IMR-90 (cell line): ENCODE measurements at regions of chr14 and their contacts with region 1.

Region 1: DNA sequence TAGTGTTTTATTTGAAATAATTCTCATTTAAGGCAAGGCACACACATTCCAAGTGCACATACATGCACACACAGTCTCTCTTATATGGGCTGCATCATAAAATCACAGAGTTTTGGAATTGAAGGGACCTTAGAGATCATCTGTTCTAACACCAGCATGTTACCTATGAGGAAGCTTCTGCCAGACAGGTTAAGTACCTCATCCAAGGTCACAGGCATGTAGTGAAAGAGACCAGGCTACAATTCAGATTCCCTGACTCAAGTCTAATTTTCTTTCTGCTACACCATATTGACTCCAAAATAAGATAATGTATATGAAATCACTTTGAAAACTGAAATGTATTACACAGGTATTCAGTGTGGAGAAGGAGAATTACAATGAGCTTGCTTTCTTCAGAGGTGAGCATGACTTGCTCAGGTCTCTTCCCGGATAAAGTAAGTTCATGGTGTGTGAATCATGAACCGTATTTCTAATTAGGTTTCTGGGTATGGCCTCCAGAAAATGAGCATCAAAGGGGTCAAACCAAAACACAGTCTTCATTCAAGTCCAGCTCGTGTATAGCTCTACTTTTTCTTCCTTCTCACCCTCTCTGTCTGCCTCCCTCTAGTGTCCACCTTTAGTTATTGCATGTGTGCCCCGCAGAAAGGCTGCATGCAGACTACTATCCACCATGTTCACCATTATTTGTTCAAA is 411.9 kb downstream of the FUT8 start:
- DNase-seq: peak; percentile 70
- ATAC-seq: peak; percentile 99
- H3K4me3 ChIP-seq: no peak overlapping the region
- H3K27ac ChIP-seq: no peak overlapping the region
- H3K4me1 ChIP-seq: no peaks in the 10 kb centered on the region
- H3K27me3 ChIP-seq: peaks cover 48% of the 10 kb centered on the region
- CTCF ChIP-seq: peak; percentile 86
- POLR2A ChIP-seq: no peak
- RAD21 ChIP-seq: peak; percentile 82

Region 2: DNA sequence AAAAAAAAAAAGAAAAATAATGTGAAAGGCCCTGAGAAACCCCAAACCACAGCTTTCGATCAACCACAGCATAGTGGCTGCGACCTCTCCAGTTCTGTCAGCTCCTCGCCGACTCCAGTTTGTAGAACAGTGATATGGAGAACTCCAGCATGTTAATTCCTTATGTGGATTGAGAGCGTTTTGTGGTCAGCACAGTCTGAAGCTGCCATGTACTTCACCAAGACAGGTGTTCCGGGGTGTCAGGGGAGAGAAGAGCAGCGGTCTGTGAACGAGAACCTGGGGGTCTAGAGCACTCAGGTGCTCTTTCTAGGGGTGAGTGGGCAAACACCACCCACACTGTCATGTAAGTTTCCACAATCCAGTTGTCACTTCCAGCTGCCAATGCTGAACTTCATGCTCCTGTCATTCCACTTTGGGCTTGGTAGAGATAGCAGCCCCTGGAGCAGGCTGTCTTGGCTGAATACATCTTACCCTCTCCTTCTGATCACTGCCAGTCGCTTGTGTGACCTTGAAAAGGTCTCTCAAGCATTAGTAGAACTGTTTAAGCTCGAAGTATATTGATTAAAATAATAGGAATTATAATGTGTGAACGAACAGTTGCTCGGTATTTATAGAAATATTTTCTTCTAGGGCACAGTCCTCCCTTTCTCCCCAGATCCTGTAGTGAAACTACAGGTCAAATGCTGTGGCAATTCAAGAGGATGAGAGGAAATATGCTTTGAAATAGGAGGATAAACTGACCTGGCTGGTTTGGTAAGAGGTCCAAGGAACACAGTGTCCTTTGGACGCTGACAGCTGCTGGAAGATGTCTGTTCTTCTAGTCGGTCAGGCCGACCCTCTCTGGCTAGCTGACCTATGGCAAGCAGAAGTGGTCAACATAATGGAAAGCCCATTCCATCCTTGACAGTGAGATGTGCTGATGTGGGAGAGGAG is 706.4 kb before region 1 on chr14:
- CTCF ChIA-PET with region 1: no interaction called
- POLR2A ChIA-PET with region 1: interaction called, 10 read pairs
- dilution Hi-C with region 1: no loop called
- in situ Hi-C with region 1: no loop called
- intact Hi-C with region 1: no loop called
- DNase-seq: no peak
- ATAC-seq: no peak
- H3K4me3 ChIP-seq: no peak overlapping the region
- H3K27ac ChIP-seq: no peak overlapping the region
- H3K4me1 ChIP-seq: no peaks in the 10 kb centered on the region
- H3K27me3 ChIP-seq: peaks cover 6% of the 10 kb centered on the region
- CTCF ChIP-seq: no peak
- POLR2A ChIP-seq: no peak
- RAD21 ChIP-seq: no peak

Region 3: DNA sequence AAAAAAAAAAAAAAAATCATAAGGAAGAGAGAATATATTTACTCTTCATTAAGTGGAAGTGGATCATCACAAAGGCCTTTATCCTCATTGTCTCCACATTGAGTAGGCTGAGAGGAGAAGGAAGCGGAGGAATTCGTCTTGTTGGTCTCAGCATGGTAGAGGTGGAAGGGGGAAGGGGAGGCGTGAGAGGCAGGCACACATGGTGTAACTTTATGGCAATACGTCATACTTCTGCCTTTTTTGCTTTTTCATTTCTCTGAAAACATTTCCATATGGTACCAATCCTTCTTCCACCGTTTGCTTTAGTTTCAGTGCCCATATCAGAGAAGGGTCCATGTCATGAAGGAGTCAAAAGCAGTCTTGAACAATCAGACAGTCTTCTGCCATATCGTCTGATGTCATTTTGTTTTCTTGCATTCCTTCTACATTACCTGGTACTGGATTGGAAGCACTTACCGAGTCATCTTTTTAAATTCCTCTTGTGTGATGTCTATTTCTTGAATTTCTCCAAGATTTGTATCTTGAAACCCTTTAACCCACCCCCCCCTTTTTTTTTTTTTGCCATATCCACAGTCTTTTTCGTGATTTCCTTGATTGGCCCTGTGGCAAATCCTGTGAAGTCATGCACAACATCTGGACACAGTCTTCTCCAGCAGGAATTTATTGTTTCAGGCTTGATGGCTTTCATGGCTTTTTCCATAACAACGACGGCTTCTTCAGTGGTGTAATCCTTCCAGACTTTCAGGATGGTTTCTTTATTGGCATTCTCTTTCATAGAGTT is 403.0 kb before region 1 on chr14:
- CTCF ChIA-PET with region 1: interaction called, 67 read pairs
- POLR2A ChIA-PET with region 1: no interaction called
- dilution Hi-C with region 1: no loop called
- in situ Hi-C with region 1: no loop called
- intact Hi-C with region 1: no loop called
- DNase-seq: peak; percentile 78
- ATAC-seq: peak; percentile 54
- H3K4me3 ChIP-seq: no peak overlapping the region
- H3K27ac ChIP-seq: no peak overlapping the region
- H3K4me1 ChIP-seq: peaks cover 5% of the 10 kb centered on the region; the same call in 1 of the 2 replicates
- H3K27me3 ChIP-seq: no peaks in the 10 kb centered on the region
- CTCF ChIP-seq: no peak
- POLR2A ChIP-seq: no peak
- RAD21 ChIP-seq: no peak

Region 4: GRCh38 chr14:65783576-65783975 is 40.9 kb before region 1 on chr14:
- CTCF ChIA-PET with region 1: no interaction called
- POLR2A ChIA-PET with region 1: no interaction called
- dilution Hi-C with region 1: no loop called
- in situ Hi-C with region 1: no loop called
- intact Hi-C with region 1: no loop called
- DNase-seq: no peak
- ATAC-seq: no peak
- H3K4me3 ChIP-seq: no peak overlapping the region
- H3K27ac ChIP-seq: no peak overlapping the region
- H3K4me1 ChIP-seq: no peaks in the 10 kb centered on the region
- H3K27me3 ChIP-seq: peaks cover 3% of the 10 kb centered on the region
- CTCF ChIP-seq: no peak
- POLR2A ChIP-seq: no peak
- RAD21 ChIP-seq: no peak

Region 5: DNA sequence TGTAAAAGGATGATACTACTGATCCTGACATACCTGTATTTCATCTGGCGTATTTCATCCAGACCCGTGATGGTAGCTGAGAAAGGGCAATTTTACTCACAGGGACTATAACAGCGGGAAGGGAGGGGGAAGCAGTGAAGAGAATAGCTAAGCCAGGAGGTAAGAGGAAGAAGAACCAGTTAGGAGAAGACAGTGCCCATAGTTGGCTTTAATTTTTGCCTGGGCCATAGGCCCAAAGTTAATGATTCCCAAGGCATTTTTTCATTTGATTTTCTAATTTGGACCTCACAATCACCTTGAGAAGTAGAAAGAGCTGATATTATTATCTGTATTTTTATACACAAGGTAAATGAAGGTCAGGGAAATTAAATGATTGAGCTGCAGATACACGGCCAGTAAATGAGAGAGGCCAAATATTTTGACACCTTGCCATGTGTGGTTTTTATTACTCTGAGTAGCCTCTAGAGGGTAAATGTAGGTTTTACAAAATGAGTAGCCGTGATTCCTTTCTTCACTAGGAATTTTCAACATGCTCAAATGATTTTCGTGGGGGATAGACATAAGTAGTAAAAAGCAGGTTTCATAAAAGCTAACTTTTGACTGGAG is 29.7 kb before region 1 on chr14:
- CTCF ChIA-PET with region 1: interaction called, 3 read pairs
- POLR2A ChIA-PET with region 1: interaction called, 10 read pairs
- dilution Hi-C with region 1: no loop called
- in situ Hi-C with region 1: no loop called
- intact Hi-C with region 1: no loop called
- DNase-seq: no peak
- ATAC-seq: no peak
- H3K4me3 ChIP-seq: no peak overlapping the region
- H3K27ac ChIP-seq: no peak overlapping the region
- H3K4me1 ChIP-seq: no peaks in the 10 kb centered on the region
- H3K27me3 ChIP-seq: peaks cover 9% of the 10 kb centered on the region
- CTCF ChIP-seq: no peak
- POLR2A ChIP-seq: no peak
- RAD21 ChIP-seq: no peak